Activated T-helper 1 cell treated with anti-CD3 and anti-CD28 coated beads, Interleukin-12 subunit alpha, Interleukin-12 subunit beta, Interleukin-2, Interleukin-4 antibody, amounts not matched to agents 30 ng/mL and 10 ng/mL and 1 ng/mL, durations not matched to agents 14 hours and 24 hours and 36 hours (primary cell): ENCODE measurements at regions of chr4 and their contacts with region 1.

Region 1: DNA sequence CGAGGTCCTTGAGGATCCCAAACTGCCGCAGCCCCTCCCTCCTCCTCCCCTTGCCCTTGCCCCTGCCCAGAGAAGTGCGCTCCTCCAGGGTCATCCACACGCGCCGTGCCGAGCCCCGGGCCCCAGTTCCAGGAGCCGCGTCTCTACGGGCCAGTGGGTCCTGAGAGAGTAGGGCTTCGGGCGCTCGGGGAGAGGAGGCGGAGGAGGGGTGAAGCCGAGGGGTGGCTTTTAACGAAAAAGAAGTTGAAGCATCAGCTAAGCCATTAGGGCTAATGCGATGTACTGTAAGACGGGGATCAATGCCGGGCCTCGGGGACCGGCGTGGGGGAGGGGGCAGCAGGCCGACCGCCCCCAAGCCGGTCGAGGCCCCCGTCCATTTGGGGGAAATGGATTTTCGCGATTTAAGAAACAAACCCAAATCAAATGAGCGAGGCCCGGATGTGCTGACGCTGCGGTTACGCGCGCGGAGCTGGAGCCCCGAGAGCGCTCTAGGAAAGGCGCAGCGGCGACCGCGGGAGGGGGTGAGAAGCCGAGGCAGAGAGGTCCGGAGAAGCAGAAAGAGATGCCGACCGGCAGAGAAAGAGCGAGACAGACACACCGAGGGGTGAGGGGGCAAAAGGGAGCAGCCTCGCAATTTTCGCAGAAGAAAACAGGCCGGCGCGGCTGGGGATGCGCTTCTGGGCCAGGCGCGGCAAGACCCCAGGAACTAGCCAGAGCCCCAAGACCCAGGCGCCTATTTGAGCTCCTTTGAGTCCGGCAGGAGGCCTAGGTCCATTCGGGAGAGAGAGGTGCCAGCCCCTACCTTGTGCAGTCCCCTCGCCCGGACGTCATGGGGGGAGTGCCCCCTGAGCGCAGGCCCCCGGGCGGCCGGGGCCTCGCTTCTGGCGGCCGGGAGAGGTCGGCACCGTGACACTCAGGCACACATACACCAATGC is 13.6 kb downstream of the HMX1 start:
- DNase-seq: no peak
- H3K4me3 Mint-ChIP-seq: no peak overlapping the region
- H3K27ac Mint-ChIP-seq: no peak overlapping the region
- H3K4me1 Mint-ChIP-seq: no peaks in the 10 kb centered on the region
- H3K27me3 Mint-ChIP-seq: peaks cover 60% of the 10 kb centered on the region

Region 2: GRCh38 chr4:8893624-8894423 is 35.8 kb after region 1 on chr4:
- intact Hi-C with region 1: loop called (anchors 2 kb)
- DNase-seq: no peak
- H3K4me3 Mint-ChIP-seq: no peak overlapping the region
- H3K27ac Mint-ChIP-seq: no peak overlapping the region
- H3K4me1 Mint-ChIP-seq: no peaks in the 10 kb centered on the region
- H3K27me3 Mint-ChIP-seq: peaks cover 33% of the 10 kb centered on the region